ENCODE measurements at regions of chr11 and their contacts with region 1.

Region 1: GRCh38 chr11:107549253-107549953 is 16.1 kb downstream of the ALKBH8 start:
- DNase-seq: no peak
- H3K4me3 ChIP-seq: no peak overlapping the region
- H3K27me3 ChIP-seq: no peaks in the 10 kb centered on the region
- CTCF ChIP-seq: peak; percentile 81

Region 2: GRCh38 chr11:107276077-107276476 is 273.3 kb before region 1 on chr11:
- CTCF ChIA-PET with region 1: no interaction called
- POLR2A ChIA-PET with region 1: no interaction called
- DNase-seq: no peak
- H3K4me3 ChIP-seq: no peak overlapping the region
- H3K27me3 ChIP-seq: no peaks in the 10 kb centered on the region
- CTCF ChIP-seq: no peak

Region 3: DNA sequence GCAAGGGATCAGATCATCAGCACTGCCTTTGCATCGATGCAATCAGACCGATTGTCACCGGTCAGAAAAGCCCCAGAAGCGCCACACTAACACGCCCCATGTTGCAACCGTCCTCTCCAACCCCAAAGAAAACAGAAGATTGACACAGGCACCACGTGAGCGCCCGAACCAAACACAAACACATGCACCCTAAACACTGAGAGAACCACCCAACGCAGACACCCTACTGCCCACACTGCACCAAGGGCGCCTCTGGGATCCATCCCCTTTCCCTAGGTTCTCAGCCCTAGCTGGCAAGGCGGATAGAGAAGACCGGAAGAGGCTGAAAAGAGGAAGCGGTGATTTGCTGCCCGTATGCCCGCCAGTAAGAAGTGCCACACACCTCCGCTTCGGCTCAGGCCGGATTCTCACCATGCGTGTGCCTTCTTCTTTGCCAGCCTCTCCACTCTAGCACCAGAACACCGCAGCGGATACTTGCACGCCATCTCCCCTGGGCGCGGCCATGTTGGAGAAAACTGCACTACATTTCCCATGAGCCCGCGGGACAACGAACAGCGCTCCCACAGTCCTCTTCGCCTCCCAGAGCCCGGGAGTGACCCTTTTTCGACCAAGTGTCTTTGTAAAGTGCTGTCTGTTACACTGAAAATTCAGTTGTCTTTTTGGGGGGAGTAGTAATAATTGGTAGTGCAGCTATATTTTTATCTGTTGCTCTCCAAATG is 16.0 kb after region 1 on chr11 and contains the start of gene ALKBH8:
- CTCF ChIA-PET with region 1: interaction called, 68 read pairs
- POLR2A ChIA-PET with region 1: no interaction called
- DNase-seq: no peak
- H3K4me3 ChIP-seq: peak within 1 kb of the TSS; percentile 87
- H3K27me3 ChIP-seq: peaks cover 3% of the 10 kb centered on the region; the same call in 1 of the 2 replicates
- CTCF ChIP-seq: 0 out of 2 replicates have a peak, but pooled peaks have one; percentile 1
- polyA plus RNA-seq, gene ALKBH8: 2.9 and 5.6 TPM in 2 replicates

Region 4: GRCh38 chr11:107705027-107705426 is 155.6 kb after region 1 on chr11:
- CTCF ChIA-PET with region 1: no interaction called
- POLR2A ChIA-PET with region 1: no interaction called
- DNase-seq: no peak
- H3K4me3 ChIP-seq: no peak overlapping the region
- H3K27me3 ChIP-seq: no peaks in the 10 kb centered on the region
- CTCF ChIP-seq: no peak